Naive thymus-derived CD4-positive, alpha-beta T cell (primary cell): ENCODE measurements at regions of chr19 and their contacts with region 1.

Region 1: GRCh38 chr19:2475702-2476450 is at the start of gene GADD45B:
- DNase-seq: peak; percentile 91 to 98 (median 97)
- ATAC-seq: peak; percentile 87
- H3K4me3 ChIP-seq: peak within 1 kb of the TSS; percentile 91
- H3K4me3 Mint-ChIP-seq: peak within 1 kb of the TSS; percentile 97 to 100 (median 99)
- H3K27ac ChIP-seq: peak within 1 kb of the TSS; percentile 90
- H3K27ac Mint-ChIP-seq: peak within 1 kb of the TSS; percentile 92 to 99 (median 96)
- H3K4me1 ChIP-seq: peaks cover 0 to 14% of the 10 kb centered on the region in 2 donors
- H3K4me1 Mint-ChIP-seq: peaks cover 7 to 20% (median 16%) of the 10 kb centered on the region in 7 donors
- H3K27me3 ChIP-seq: no peaks in the 10 kb centered on the region
- H3K27me3 Mint-ChIP-seq: peaks cover 0 to 10% (median 0%) of the 10 kb centered on the region in 5 donors
- total RNA-seq, gene GADD45B: 71.7 to 157 (median 84.2) TPM

Region 2: GRCh38 chr19:2236314-2237050 is 239.4 kb before region 1 on chr19 and contains the starts of genes PLEKHJ1 and SF3A2:
- CTCF ChIA-PET with region 1: no interaction called
- POLR2A ChIA-PET with region 1: interaction called, 5 read pairs
- intact Hi-C with region 1: loop called (anchors 1 to 5 kb)
- DNase-seq: peak; percentile 96 to 100 (median 100)
- ATAC-seq: peak; percentile 90
- H3K4me3 ChIP-seq: peak within 1 kb of the TSS; percentile 75
- H3K4me3 Mint-ChIP-seq: peak within 1 kb of the TSS; percentile 96 to 100 (median 98)
- H3K27ac ChIP-seq: peak within 1 kb of the TSS; percentile 93
- H3K27ac Mint-ChIP-seq: peak within 1 kb of the TSS; percentile 96 to 99 (median 98)
- H3K4me1 ChIP-seq: peaks cover 42 to 50% of the 10 kb centered on the region in 2 donors
- H3K4me1 Mint-ChIP-seq: peaks cover 41 to 69% (median 57%) of the 10 kb centered on the region in 7 donors
- H3K27me3 ChIP-seq: no peaks in the 10 kb centered on the region
- H3K27me3 Mint-ChIP-seq: peaks cover 0 to 5% (median 0%) of the 10 kb centered on the region in 5 donors
- total RNA-seq, gene PLEKHJ1: 32.9 to 65.0 (median 50.2) TPM
- total RNA-seq, gene SF3A2: 131 to 150 (median 133) TPM

Region 3: GRCh38 chr19:2488942-2489731 is 13.3 kb after region 1 on chr19:
- CTCF ChIA-PET with region 1: interaction called, 5 read pairs
- POLR2A ChIA-PET with region 1: interaction called, 81 read pairs
- intact Hi-C with region 1: loop called in 1 of 2 experiments (anchors 1 kb)
- DNase-seq: no peak
- ATAC-seq: peak; percentile 20
- H3K4me3 ChIP-seq: peak overlapping the region; percentile 13
- H3K4me3 Mint-ChIP-seq: peak overlapping the region; percentile 32 to 88 (median 65)
- H3K27ac ChIP-seq: no peak overlapping the region
- H3K27ac Mint-ChIP-seq: no peak overlapping the region
- H3K4me1 ChIP-seq: peaks cover 4 to 7% of the 10 kb centered on the region in 2 donors
- H3K4me1 Mint-ChIP-seq: peaks cover 8 to 28% (median 22%) of the 10 kb centered on the region in 7 donors
- H3K27me3 ChIP-seq: peaks cover 4 to 8% of the 10 kb centered on the region in 2 donors
- H3K27me3 Mint-ChIP-seq: peaks cover 20 to 77% (median 27%) of the 10 kb centered on the region in 5 donors

Region 4: GRCh38 chr19:2543463-2544442 is 67.9 kb after region 1 on chr19:
- CTCF ChIA-PET with region 1: interaction called, 3 read pairs
- POLR2A ChIA-PET with region 1: interaction called, 26 read pairs
- intact Hi-C with region 1: no loop called
- DNase-seq: peak in 8 of 9 donors; percentile 16 to 69 (median 36)
- ATAC-seq: peak; percentile 80
- H3K4me3 ChIP-seq: peak overlapping the region; percentile 38
- H3K4me3 Mint-ChIP-seq: peak overlapping the region; percentile 55 to 83 (median 74)
- H3K27ac ChIP-seq: no peak overlapping the region
- H3K27ac Mint-ChIP-seq: peak overlapping the region in 8 of 9 donors; percentile 42 to 88 (median 68)
- H3K4me1 ChIP-seq: peaks cover 4 to 6% of the 10 kb centered on the region in 2 donors
- H3K4me1 Mint-ChIP-seq: peaks cover 10 to 28% (median 15%) of the 10 kb centered on the region in 7 donors
- H3K27me3 ChIP-seq: no peaks in the 10 kb centered on the region
- H3K27me3 Mint-ChIP-seq: no peaks in the 10 kb centered on the region

Region 5: DNA sequence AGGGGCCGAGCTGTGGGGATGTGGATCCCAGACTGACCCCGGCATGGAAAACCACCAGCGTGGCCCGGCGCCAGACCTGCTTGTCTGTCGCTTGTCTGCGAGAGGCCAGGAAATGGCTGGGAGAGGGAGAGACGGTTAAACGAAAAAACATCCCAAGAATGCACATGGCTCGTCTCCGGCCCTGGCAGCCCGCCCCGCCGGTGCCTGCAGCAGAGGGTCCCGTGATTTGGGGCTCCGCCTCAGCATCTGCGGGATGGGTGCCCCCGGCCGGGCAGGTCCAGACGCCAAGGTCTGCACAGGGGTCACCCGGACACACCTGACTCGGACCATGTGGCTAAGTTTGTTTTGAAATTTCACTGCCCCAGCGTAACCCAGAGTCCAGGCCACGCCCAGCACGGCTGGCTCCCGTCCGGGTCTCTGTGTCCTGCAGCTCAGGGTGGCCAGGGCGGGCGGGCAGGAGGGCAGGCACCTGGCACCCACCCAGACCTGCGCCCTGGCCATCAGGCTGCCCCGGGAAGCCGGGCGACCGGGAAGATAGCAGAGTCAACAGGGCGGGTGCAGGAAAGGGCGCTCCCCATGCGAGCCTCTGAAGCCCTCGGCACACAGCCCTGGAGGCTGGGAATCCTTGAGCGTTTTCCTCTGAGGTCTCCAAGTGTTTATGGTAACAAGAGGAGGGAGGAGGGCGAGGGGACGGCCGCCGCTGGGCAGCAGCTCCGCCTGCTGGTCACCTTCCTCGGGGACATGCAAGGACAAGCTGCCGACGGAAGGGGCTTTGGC is 103.2 kb after region 1 on chr19:
- CTCF ChIA-PET with region 1: interaction called, 21 read pairs
- POLR2A ChIA-PET with region 1: interaction called, 85 read pairs
- intact Hi-C with region 1: loop called (anchors 1 kb)
- DNase-seq: peak; percentile 21 to 67 (median 47)
- ATAC-seq: peak; percentile 65
- H3K4me3 ChIP-seq: peak overlapping the region; percentile 33
- H3K4me3 Mint-ChIP-seq: peak overlapping the region in 6 of 10 donors; percentile 51 to 69 (median 62)
- H3K27ac ChIP-seq: no peak overlapping the region
- H3K27ac Mint-ChIP-seq: no peak overlapping the region
- H3K4me1 ChIP-seq: peaks cover 7 to 10% of the 10 kb centered on the region in 2 donors
- H3K4me1 Mint-ChIP-seq: peaks cover 0 to 11% (median 4%) of the 10 kb centered on the region in 7 donors
- H3K27me3 ChIP-seq: no peaks in the 10 kb centered on the region
- H3K27me3 Mint-ChIP-seq: peaks cover 0 to 24% (median 0%) of the 10 kb centered on the region in 5 donors

Region 6: GRCh38 chr19:2636897-2637683 is 161.2 kb after region 1 on chr19:
- CTCF ChIA-PET with region 1: interaction called, 17 read pairs
- POLR2A ChIA-PET with region 1: interaction called, 24 read pairs
- intact Hi-C with region 1: loop called (anchors 1 kb)
- DNase-seq: peak; percentile 64 to 84 (median 74)
- ATAC-seq: peak; percentile 97
- H3K4me3 ChIP-seq: no peak overlapping the region
- H3K4me3 Mint-ChIP-seq: peak overlapping the region in 5 of 10 donors; percentile 23 to 37 (median 23)
- H3K27ac ChIP-seq: no peak overlapping the region
- H3K27ac Mint-ChIP-seq: peak overlapping the region in 1 of 9 donors; percentile 70
- H3K4me1 ChIP-seq: peaks cover 0 to 10% of the 10 kb centered on the region in 2 donors
- H3K4me1 Mint-ChIP-seq: peaks cover 5 to 18% (median 13%) of the 10 kb centered on the region in 7 donors
- H3K27me3 ChIP-seq: no peaks in the 10 kb centered on the region
- H3K27me3 Mint-ChIP-seq: peaks cover 0 to 11% (median 0%) of the 10 kb centered on the region in 5 donors